ENCODE measurements at regions of chr11 and their contacts with region 1.

Region 1: GRCh38 chr11:43895601-43896000 is 15.0 kb downstream of the ALKBH3 start:
- DNase-seq: no peak
- ATAC-seq: no peak

Region 2: DNA sequence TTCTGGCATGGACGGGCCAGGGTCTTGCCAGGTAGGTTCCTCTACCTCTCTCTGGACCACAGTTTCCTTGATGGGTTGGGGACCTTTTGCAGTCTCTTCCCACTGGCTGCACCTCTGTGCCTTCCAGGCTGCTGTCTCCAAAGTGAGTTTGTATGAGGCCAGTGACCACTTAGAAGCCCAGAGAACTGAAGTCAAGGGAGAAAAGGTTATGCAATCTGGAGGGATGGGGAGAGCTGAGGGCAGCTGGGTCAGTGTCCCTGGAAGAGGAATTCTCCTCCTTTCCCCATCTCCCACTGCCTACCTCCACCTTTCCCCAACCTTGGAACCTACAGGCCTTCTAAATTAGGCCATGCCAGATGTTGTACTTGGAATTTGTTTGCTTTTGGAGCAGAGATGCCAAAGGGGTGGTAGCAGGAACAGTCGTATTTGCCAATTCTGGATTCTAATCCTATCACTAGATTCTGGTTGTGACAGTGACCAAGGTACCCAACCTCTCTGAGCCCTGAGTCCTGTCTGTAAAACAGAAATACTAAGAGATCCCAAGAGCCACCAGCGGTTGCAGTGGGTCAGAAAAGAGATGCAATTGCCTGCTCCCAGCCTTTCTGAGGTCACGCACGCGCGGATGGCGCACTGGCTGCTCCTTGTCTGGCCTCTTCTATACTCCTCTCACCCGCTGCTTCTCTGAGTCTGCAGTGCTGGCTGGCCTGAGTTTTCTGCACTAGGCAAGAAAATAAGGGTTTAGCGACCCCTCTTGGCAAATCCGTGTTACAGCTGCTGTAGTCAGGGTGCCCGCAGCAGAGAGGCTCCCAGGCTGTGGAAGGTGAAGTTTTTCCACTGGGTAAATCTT is 141.4 kb after region 1 on chr11:
- intact Hi-C with region 1: loop called (anchors 1 kb)
- DNase-seq: peak; percentile 89
- ATAC-seq: peak; percentile 96

Region 3: GRCh38 chr11:44149651-44150050 is 254.1 kb after region 1 on chr11:
- intact Hi-C with region 1: no loop called
- DNase-seq: no peak
- ATAC-seq: peak; percentile 46